ENCODE measurements at regions of chr13 and their contacts with region 1.

Region 1: GRCh38 chr13:101452519-101453485 is at the start of gene ITGBL1:
- DNase-seq: no peak
- H3K4me3 ChIP-seq: peak within 1 kb of the TSS; percentile 86
- CTCF ChIP-seq: no peak

Region 2: GRCh38 chr13:101397742-101398141 is 55.1 kb before region 1 on chr13:
- CTCF ChIA-PET with region 1: no interaction called
- POLR2A ChIA-PET with region 1: interaction called, 11 read pairs
- DNase-seq: no peak
- H3K4me3 ChIP-seq: no peak overlapping the region
- CTCF ChIP-seq: no peak

Measured in AG04449 (cell line).